ENCODE measurements at regions of chr11 and their contacts with region 1.

Region 1: DNA sequence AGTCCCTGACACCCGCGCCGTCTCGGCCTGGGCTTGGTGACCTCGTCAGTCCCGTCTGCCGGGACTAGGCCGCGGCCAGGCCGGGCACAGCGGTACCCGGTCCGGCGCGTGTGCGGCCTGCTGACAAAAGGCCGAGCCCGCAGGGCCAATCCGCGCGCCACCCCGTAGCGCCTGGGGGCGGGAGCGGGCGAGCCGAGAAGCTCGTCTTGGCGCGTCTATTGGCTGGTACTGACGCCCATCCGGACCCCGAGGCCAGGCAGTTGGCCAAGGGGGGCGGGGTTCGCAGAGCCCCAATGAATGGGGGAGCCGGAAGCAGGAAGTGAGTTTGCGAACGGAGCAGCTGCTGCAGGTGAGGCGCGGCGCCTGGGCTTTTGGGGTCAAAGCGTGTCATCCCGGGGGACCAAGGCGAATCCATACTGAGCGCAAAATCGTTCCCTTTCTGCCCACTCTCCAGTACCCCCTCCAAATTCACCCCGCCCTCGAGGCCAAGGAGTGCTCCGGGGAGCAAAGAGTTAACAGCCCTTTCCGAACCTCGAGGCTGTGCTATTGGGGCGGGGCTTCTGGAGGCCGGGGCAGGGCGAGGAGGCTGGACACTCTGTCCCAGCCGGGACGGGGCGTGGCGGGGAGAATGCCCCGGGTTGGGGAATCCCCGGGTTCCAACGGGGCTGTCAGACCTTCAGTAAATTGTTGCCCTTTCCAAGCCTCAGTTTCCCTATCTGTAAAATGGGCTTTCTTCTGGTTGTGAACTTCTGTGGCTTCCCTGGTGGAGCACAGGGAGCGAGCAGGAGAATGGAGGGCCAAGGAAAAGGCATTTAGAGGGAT is at the start of gene DPP3:
- DNase-seq: peak; percentile 93 to 97 (median 94)
- H3K4me3 ChIP-seq: peak within 1 kb of the TSS; percentile 90
- H3K4me3 Mint-ChIP-seq: peak within 1 kb of the TSS; percentile 87 to 99 (median 92)
- H3K27ac ChIP-seq: peak within 1 kb of the TSS; percentile 83
- H3K27ac Mint-ChIP-seq: peak within 1 kb of the TSS; percentile 74 to 97 (median 92)
- H3K4me1 ChIP-seq: peaks cover 18% of the 10 kb centered on the region
- H3K4me1 Mint-ChIP-seq: peaks cover 22 to 40% (median 30%) of the 10 kb centered on the region in 3 donors
- H3K27me3 ChIP-seq: no peaks in the 10 kb centered on the region
- H3K27me3 Mint-ChIP-seq: peaks cover 0 to 1% of the 10 kb centered on the region in 2 donors
- total RNA-seq, gene DPP3: 67.7 to 80.1 TPM

Region 2: DNA sequence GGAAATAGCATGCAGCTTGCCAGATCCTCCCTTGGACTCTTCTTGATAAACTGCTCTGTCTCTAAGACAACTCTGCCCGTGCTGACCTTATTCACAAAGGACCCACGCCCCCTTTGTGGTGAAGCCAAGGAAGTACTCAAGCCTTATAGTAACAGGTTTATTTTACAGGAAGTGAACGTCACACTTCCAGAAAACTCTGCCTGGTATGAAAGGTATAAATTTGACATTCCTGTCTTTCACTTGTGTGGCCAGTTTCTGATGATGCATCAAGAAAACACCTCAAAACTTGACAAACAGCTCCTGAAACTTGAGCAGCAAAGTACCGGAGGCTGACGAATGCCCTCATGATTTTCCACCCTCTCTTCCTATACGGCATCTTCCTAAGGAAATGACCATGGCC is 26.1 kb before region 1 on chr11:
- CTCF ChIA-PET with region 1: no interaction called
- POLR2A ChIA-PET with region 1: no interaction called
- DNase-seq: no peak
- H3K4me3 ChIP-seq: no peak overlapping the region
- H3K4me3 Mint-ChIP-seq: peak overlapping the region in 1 of 7 donors; percentile 44
- H3K27ac ChIP-seq: no peak overlapping the region
- H3K27ac Mint-ChIP-seq: peak overlapping the region in 1 of 8 donors; percentile 66
- H3K4me1 ChIP-seq: peaks cover 12% of the 10 kb centered on the region
- H3K4me1 Mint-ChIP-seq: peaks cover 12 to 17% (median 17%) of the 10 kb centered on the region in 3 donors
- H3K27me3 ChIP-seq: no peaks in the 10 kb centered on the region
- H3K27me3 Mint-ChIP-seq: peaks cover 2 to 23% of the 10 kb centered on the region in 2 donors

Region 3: DNA sequence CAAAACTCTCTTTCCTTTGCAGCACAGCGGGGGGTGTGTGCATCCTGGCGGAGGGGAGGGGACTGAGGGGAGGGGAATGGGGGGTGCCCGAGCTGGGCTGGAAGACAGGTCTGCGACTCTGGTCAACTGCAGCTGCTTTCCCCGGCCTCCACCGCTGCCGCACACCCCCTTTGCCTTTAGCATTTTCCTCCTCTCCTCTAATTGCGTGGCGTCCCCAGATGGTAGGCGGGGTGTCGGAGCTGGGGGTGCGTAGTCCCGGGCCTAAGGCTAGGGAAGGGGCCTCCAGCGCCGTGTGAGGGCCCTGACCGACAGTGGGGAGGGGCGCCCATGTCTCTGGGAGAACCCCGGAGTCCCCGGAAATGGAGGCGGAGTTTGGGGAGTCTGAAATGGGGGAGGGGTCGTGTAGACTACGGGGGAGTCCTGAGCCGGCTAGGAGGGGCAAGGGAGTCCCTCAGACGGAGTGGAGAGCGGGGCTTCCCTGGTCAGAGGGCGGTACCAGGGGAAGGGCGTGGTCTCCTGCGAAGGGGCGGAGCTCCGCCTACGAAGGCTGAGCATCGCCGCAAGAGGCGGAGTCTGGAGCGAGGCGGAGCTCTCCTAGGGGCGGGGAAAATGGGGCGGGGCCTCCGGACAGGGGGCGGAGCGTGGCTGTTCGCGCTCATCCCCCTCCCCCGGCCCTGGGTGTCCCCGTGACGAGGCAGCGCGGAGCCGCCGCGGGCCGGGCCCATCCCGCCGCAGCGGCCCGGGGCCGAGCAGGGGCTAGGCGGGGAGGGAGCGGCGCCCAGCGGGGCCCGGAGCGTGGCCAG is 13.9 kb before region 1 on chr11 and contains the start of gene PELI3:
- CTCF ChIA-PET with region 1: interaction called, 5 read pairs
- POLR2A ChIA-PET with region 1: interaction called, 43 read pairs
- DNase-seq: peak; percentile 91 to 97 (median 94)
- H3K4me3 ChIP-seq: peak within 1 kb of the TSS; percentile 78
- H3K4me3 Mint-ChIP-seq: peak within 1 kb of the TSS; percentile 87 to 97 (median 90)
- H3K27ac ChIP-seq: peak within 1 kb of the TSS; percentile 60
- H3K27ac Mint-ChIP-seq: peak within 1 kb of the TSS; percentile 88 to 98 (median 92)
- H3K4me1 ChIP-seq: peaks cover 11% of the 10 kb centered on the region
- H3K4me1 Mint-ChIP-seq: peaks cover 18 to 28% (median 20%) of the 10 kb centered on the region in 3 donors
- H3K27me3 ChIP-seq: no peaks in the 10 kb centered on the region
- H3K27me3 Mint-ChIP-seq: no peaks in the 10 kb centered on the region
- total RNA-seq, gene PELI3: 5.3 to 6.6 TPM

Region 4: DNA sequence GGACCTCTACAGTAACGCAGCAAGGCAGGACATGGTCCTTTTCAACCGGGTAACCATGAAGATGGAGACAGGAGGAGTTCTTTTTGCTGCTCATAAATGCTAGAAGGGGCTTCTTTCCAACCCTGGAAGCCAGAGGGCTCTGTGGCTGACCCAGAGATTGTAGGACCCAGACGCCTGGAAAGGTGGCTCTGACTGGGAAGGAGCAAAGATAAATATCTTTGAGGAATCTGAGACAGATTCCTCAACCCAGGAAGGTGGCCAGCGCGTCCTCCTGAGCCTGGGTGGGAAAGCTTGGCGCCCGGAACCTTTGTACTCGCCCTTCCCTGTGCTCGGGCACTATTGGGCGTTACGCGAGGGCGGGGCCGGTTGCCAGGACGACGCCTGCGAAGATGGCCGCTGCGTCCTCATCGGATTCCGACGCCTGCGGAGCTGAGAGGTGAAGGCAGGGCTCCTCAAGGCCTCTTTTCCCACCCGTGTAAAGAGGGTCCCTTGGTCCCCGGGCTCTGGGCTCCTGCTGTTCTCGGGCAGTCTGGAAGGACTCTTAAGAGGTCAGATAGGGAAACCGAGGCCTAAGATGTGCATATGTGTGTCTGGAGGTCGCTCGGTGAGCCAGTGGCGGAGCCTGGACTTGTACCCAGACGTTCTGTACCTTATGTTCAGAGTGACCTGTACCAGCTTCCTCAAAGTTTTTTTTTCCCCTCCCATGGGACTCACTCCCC is 30.1 kb after region 1 on chr11 and contains the start of gene BBS1:
- CTCF ChIA-PET with region 1: interaction called, 3 read pairs
- POLR2A ChIA-PET with region 1: interaction called, 12 read pairs
- DNase-seq: peak; percentile 65 to 84 (median 71)
- H3K4me3 ChIP-seq: peak within 1 kb of the TSS; percentile 65
- H3K4me3 Mint-ChIP-seq: peak within 1 kb of the TSS; percentile 86 to 94 (median 90)
- H3K27ac ChIP-seq: peak within 1 kb of the TSS; percentile 19
- H3K27ac Mint-ChIP-seq: peak within 1 kb of the TSS; percentile 65 to 94 (median 82)
- H3K4me1 ChIP-seq: peaks cover 11% of the 10 kb centered on the region
- H3K4me1 Mint-ChIP-seq: peaks cover 12 to 24% (median 17%) of the 10 kb centered on the region in 3 donors
- H3K27me3 ChIP-seq: no peaks in the 10 kb centered on the region
- H3K27me3 Mint-ChIP-seq: no peaks in the 10 kb centered on the region
- total RNA-seq, gene BBS1: 17.7 to 21.2 TPM

Measured in CD8-positive, alpha-beta memory T cell (primary cell).